Heart right ventricle (tissue), 16 donors: ENCODE measurements at regions of chr14 and their contacts with region 1.

Region 1: GRCh38 chr14:91649930-91650329 is 82.0 kb downstream of the CATSPERB start:
- DNase-seq: peak in 1 of 2 donors; percentile 11
- ATAC-seq: no peak
- H3K4me3 ChIP-seq: no peak overlapping the region
- H3K27ac ChIP-seq: no peak overlapping the region
- H3K4me1 ChIP-seq: no peaks in the 10 kb centered on the region
- H3K27me3 ChIP-seq: peaks cover 0 to 13% (median 0%) of the 10 kb centered on the region in 7 donors
- CTCF ChIP-seq: peak; percentile 27 to 73 (median 66)

Region 2: DNA sequence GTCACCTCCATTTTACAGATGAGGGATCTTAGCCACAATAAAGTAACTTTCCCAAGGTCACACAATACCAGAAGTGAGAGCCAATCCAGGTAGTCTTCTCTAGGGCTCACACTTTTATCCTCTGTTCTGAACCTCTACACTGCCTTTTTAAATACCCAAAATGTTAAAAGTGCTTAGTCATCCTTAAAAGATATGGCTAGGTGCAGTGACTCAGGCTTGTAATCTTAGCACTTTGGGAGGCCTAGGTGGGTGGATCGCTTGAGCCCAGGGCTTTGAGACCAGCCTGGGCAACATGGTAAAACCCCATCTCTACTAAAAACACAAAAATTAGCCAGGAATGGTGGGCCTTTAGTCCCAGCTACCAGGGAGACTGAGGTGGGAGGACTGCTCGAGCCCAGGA is 35.7 kb before region 1 on chr14:
- intact Hi-C with region 1: no loop called
- DNase-seq: no peak
- ATAC-seq: no peak
- H3K4me3 ChIP-seq: no peak overlapping the region
- H3K27ac ChIP-seq: no peak overlapping the region
- H3K4me1 ChIP-seq: no peaks in the 10 kb centered on the region
- H3K27me3 ChIP-seq: peaks cover 0 to 4% (median 0%) of the 10 kb centered on the region in 7 donors
- CTCF ChIP-seq: no peak

Region 3: GRCh38 chr14:91911474-91912032 is 261.6 kb after region 1 on chr14:
- intact Hi-C with region 1: loop called in 9 of 10 experiments (anchors 1 to 5 kb)
- DNase-seq: no peak
- ATAC-seq: peak; percentile 47 to 85 (median 68)
- H3K4me3 ChIP-seq: no peak overlapping the region
- H3K27ac ChIP-seq: no peak overlapping the region
- H3K4me1 ChIP-seq: peaks cover 0 to 13% (median 6%) of the 10 kb centered on the region in 9 donors
- H3K27me3 ChIP-seq: no peaks in the 10 kb centered on the region
- CTCF ChIP-seq: peak in 7 of 9 donors; percentile 38 to 64 (median 59)

Region 4: GRCh38 chr14:91996948-91997371 is 347.0 kb after region 1 on chr14:
- intact Hi-C with region 1: loop called in 7 of 10 experiments (anchors 5 to 10 kb)
- DNase-seq: no peak
- ATAC-seq: peak in 3 of 8 donors; percentile 23 to 53 (median 47)
- H3K4me3 ChIP-seq: no peak overlapping the region
- H3K27ac ChIP-seq: no peak overlapping the region
- H3K4me1 ChIP-seq: peaks cover 0 to 27% (median 8%) of the 10 kb centered on the region in 9 donors
- H3K27me3 ChIP-seq: no peaks in the 10 kb centered on the region
- CTCF ChIP-seq: peak; percentile 18 to 71 (median 57)